CD4-positive, alpha-beta T cell (primary cell): ENCODE measurements at regions of chr14 and their contacts with region 1.

Region 1: GRCh38 chr14:63993992-63994391 is 141.2 kb downstream of the SYNE2 start:
- DNase-seq: peak in 4 of 14 experiments; percentile 7 to 32 (median 26)
- ATAC-seq: peak; percentile 44
- H3K4me3 ChIP-seq: no peak overlapping the region
- H3K4me3 Mint-ChIP-seq: no peak overlapping the region
- H3K27ac ChIP-seq: no peak overlapping the region
- H3K27ac Mint-ChIP-seq: no peak overlapping the region
- H3K4me1 ChIP-seq: peaks cover 2% of the 10 kb centered on the region
- H3K4me1 Mint-ChIP-seq: no peaks in the 10 kb centered on the region
- H3K27me3 ChIP-seq: no peaks in the 10 kb centered on the region
- H3K27me3 Mint-ChIP-seq: no peaks in the 10 kb centered on the region
- CTCF ChIP-seq: peak; percentile 39

Region 2: DNA sequence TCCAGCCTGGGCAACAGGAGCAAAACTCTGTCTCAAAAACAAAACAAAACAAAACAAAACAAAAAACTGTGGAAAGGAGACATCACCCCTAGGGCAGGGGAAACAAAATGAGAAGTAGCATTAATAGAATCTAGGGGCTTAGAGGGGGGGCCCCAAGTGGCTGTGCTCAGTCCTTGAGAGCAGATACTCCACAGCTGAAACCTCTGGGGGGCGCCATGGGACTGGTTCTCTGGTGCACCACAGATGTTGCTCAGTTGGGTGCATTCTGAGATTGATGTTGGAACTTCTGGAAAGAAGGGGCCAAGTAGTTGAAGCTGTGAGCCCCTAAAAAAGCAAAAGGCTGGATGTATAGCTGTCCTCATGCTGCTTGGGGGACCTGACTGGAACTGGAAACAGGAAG is 153.0 kb before region 1 on chr14:
- CTCF ChIA-PET with region 1: no interaction called
- POLR2A ChIA-PET with region 1: no interaction called
- intact Hi-C with region 1: loop called (anchors 5 kb)
- DNase-seq: peak; percentile 52 to 81 (median 63)
- ATAC-seq: peak; percentile 73
- H3K4me3 ChIP-seq: no peak overlapping the region
- H3K4me3 Mint-ChIP-seq: no peak overlapping the region
- H3K27ac ChIP-seq: no peak overlapping the region
- H3K27ac Mint-ChIP-seq: no peak overlapping the region
- H3K4me1 ChIP-seq: peaks cover 5% of the 10 kb centered on the region
- H3K4me1 Mint-ChIP-seq: no peaks in the 10 kb centered on the region
- H3K27me3 ChIP-seq: no peaks in the 10 kb centered on the region
- H3K27me3 Mint-ChIP-seq: no peaks in the 10 kb centered on the region
- CTCF ChIP-seq: peak; percentile 49